ENCODE measurements at regions of chr17 and their contacts with region 1.

Region 1: GRCh38 chr17:38444151-38444550 is 15.9 kb downstream of the ARHGAP23 start:
- DNase-seq: peak; percentile 33 to 48 (median 41)
- H3K4me3 ChIP-seq: no peak overlapping the region
- H3K4me3 Mint-ChIP-seq: no peak overlapping the region
- H3K27ac ChIP-seq: no peak overlapping the region
- H3K27ac Mint-ChIP-seq: peak overlapping the region in 1 of 7 donors; percentile 30
- H3K4me1 ChIP-seq: peaks cover 8% of the 10 kb centered on the region
- H3K4me1 Mint-ChIP-seq: peaks cover 0 to 6% (median 5%) of the 10 kb centered on the region in 4 donors
- H3K27me3 ChIP-seq: no peaks in the 10 kb centered on the region
- H3K27me3 Mint-ChIP-seq: peaks cover 3 to 16% of the 10 kb centered on the region in 2 donors

Region 2: DNA sequence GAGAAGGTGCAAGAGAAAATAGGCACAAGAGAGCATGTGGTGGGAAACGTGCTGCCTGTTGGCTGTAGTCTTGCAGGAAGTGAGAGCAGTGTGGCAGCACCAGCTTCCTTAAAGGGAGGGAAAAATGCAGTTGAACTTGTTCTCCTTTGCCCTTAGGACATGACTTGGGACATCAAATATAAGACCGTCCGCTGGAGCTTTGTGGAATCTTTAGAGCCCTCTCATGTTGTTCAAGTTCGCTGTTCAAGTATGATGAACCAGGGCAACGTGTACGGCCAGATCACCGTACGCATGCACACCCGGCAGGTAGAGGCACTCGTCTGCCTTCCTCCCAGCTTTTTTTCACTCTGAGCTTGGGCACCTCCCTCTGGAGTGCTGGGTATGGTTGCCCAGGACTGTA is 123.7 kb before region 1 on chr17:
- CTCF ChIA-PET with region 1: no interaction called
- POLR2A ChIA-PET with region 1: no interaction called
- intact Hi-C with region 1: no loop called
- DNase-seq: no peak
- H3K4me3 ChIP-seq: no peak overlapping the region
- H3K4me3 Mint-ChIP-seq: no peak overlapping the region
- H3K27ac ChIP-seq: no peak overlapping the region
- H3K27ac Mint-ChIP-seq: no peak overlapping the region
- H3K4me1 ChIP-seq: no peaks in the 10 kb centered on the region
- H3K4me1 Mint-ChIP-seq: no peaks in the 10 kb centered on the region
- H3K27me3 ChIP-seq: no peaks in the 10 kb centered on the region
- H3K27me3 Mint-ChIP-seq: no peaks in the 10 kb centered on the region

Region 3: DNA sequence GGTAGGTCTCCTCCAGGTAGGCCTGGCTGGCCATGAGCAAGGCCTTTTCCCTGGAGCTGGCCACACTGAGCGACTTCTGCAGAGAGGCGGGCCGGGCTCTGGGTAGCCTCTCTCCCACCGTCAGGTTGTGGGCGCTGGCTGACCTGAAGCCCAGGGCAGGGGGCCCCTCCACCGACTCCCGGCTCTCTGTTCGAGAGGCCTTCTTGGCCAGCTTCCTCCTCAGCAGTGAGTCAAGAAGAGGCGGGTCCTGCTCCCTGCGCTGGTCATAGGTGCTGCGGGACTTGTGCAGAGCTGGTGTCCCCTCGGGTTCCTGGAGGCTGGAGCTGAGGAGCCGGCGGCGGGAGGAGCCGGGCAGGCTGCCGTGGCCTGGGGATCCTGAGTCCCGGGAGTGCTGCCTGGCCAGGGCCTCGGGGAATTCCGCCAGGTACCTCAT is 113.2 kb before region 1 on chr17:
- CTCF ChIA-PET with region 1: no interaction called
- POLR2A ChIA-PET with region 1: no interaction called
- intact Hi-C with region 1: no loop called
- DNase-seq: no peak
- H3K4me3 ChIP-seq: no peak overlapping the region
- H3K4me3 Mint-ChIP-seq: no peak overlapping the region
- H3K27ac ChIP-seq: no peak overlapping the region
- H3K27ac Mint-ChIP-seq: no peak overlapping the region
- H3K4me1 ChIP-seq: no peaks in the 10 kb centered on the region
- H3K4me1 Mint-ChIP-seq: peaks cover 0 to 6% (median under 1%) of the 10 kb centered on the region in 4 donors
- H3K27me3 ChIP-seq: no peaks in the 10 kb centered on the region
- H3K27me3 Mint-ChIP-seq: peaks cover 7 to 21% of the 10 kb centered on the region in 2 donors

Region 4: DNA sequence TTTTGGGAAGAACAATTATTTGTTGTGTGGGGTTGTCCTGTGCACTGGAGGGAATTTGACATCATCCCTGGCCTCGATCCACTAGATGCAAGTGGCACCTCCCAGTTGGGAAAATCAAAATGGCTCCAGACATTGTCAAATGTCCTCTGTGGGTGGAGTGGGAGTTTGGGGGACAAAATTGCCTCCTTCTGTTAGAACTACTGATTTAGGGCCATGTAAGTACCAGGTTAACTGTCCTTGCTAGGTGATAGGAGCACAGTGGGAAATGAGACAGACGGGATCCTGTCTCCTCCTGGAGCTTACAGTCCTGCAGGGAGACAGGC is 41.0 kb after region 1 on chr17:
- CTCF ChIA-PET with region 1: no interaction called
- POLR2A ChIA-PET with region 1: no interaction called
- intact Hi-C with region 1: loop called (anchors 2 kb)
- DNase-seq: peak in 1 of 5 donors; percentile 7
- H3K4me3 ChIP-seq: no peak overlapping the region
- H3K4me3 Mint-ChIP-seq: peak overlapping the region in 7 of 8 donors; percentile 17 to 71 (median 61)
- H3K27ac ChIP-seq: no peak overlapping the region
- H3K27ac Mint-ChIP-seq: peak overlapping the region in 6 of 7 donors; percentile 12 to 76 (median 73)
- H3K4me1 ChIP-seq: peaks cover 3% of the 10 kb centered on the region
- H3K4me1 Mint-ChIP-seq: peaks cover 4 to 13% (median 11%) of the 10 kb centered on the region in 4 donors
- H3K27me3 ChIP-seq: no peaks in the 10 kb centered on the region
- H3K27me3 Mint-ChIP-seq: no peaks in the 10 kb centered on the region

Measured in CD4-positive, alpha-beta memory T cell (primary cell).